ENCODE measurements at regions of chr4 and their contacts with region 1.

Region 1: GRCh38 chr4:73573794-73574406 is 46.3 kb downstream of the RASSF6 start:
- DNase-seq: peak; percentile 62
- ATAC-seq: peak; percentile 67
- H3K4me3 ChIP-seq: no peak overlapping the region
- H3K4me3 Mint-ChIP-seq: no peak overlapping the region
- H3K27ac ChIP-seq: no peak overlapping the region
- H3K27ac Mint-ChIP-seq: no peak overlapping the region
- H3K4me1 ChIP-seq: peaks cover 0 to 4% of the 10 kb centered on the region in 2 donors
- H3K4me1 Mint-ChIP-seq: peaks cover 3% of the 10 kb centered on the region
- H3K27me3 ChIP-seq: no peaks in the 10 kb centered on the region
- H3K27me3 Mint-ChIP-seq: no peaks in the 10 kb centered on the region
- CTCF ChIP-seq: peak; percentile 74

Region 2: GRCh38 chr4:73406548-73406875 is 167.4 kb before region 1 on chr4:
- CTCF ChIA-PET with region 1: no interaction called
- POLR2A ChIA-PET with region 1: no interaction called
- intact Hi-C with region 1: no loop called
- DNase-seq: no peak
- ATAC-seq: no peak
- H3K4me3 ChIP-seq: no peak overlapping the region
- H3K4me3 Mint-ChIP-seq: no peak overlapping the region
- H3K27ac ChIP-seq: no peak overlapping the region
- H3K27ac Mint-ChIP-seq: no peak overlapping the region
- H3K4me1 ChIP-seq: no peaks in the 10 kb centered on the region
- H3K4me1 Mint-ChIP-seq: no peaks in the 10 kb centered on the region
- H3K27me3 ChIP-seq: no peaks in the 10 kb centered on the region
- H3K27me3 Mint-ChIP-seq: peaks cover 3% of the 10 kb centered on the region
- CTCF ChIP-seq: no peak

Region 3: GRCh38 chr4:73445383-73446335 is 128.2 kb before region 1 on chr4:
- CTCF ChIA-PET with region 1: no interaction called
- POLR2A ChIA-PET with region 1: no interaction called
- intact Hi-C with region 1: no loop called
- DNase-seq: no peak
- ATAC-seq: no peak
- H3K4me3 ChIP-seq: no peak overlapping the region
- H3K4me3 Mint-ChIP-seq: no peak overlapping the region
- H3K27ac ChIP-seq: no peak overlapping the region
- H3K27ac Mint-ChIP-seq: no peak overlapping the region
- H3K4me1 ChIP-seq: no peaks in the 10 kb centered on the region
- H3K4me1 Mint-ChIP-seq: no peaks in the 10 kb centered on the region
- H3K27me3 ChIP-seq: peaks cover 0 to 4% (median 0%) of the 10 kb centered on the region in 4 experiments
- H3K27me3 Mint-ChIP-seq: peaks cover 25% of the 10 kb centered on the region
- CTCF ChIP-seq: no peak

Region 4: DNA sequence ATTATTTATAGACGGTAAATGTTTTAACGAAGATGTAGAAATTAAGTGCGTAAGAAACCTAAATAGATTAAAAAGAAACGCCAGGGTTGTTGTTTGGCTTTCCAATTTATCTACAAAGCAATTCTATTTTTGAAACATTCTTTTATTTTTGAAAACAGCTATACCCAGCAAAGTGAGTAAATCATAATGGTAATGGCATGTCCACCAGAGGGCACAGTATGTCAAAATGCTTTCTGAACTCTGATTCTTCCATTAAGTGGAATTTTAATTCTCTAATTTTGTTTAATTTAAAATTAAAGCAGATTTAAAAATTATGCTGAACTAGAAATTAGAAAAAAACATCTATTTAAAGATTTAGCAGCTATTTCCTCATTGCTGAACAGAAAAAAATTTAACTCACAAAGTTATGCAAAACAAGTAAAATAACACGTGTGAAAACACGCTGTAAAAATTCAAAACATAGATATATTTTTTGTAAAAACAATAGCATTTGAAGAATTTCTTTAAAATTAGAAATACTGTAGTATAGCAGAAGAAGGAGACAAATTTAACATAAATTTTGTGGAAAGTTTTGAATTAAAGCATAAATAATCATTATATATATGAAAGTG is 19.8 kb after region 1 on chr4:
- CTCF ChIA-PET with region 1: interaction called, 15 read pairs
- POLR2A ChIA-PET with region 1: interaction called, 3 read pairs
- intact Hi-C with region 1: loop called (anchors 2 kb)
- DNase-seq: peak; percentile 32
- ATAC-seq: no peak
- H3K4me3 ChIP-seq: no peak overlapping the region
- H3K4me3 Mint-ChIP-seq: no peak overlapping the region
- H3K27ac ChIP-seq: no peak overlapping the region
- H3K27ac Mint-ChIP-seq: no peak overlapping the region
- H3K4me1 ChIP-seq: peaks cover 12 to 16% of the 10 kb centered on the region in 2 donors
- H3K4me1 Mint-ChIP-seq: peaks cover 43% of the 10 kb centered on the region
- H3K27me3 ChIP-seq: no peaks in the 10 kb centered on the region
- H3K27me3 Mint-ChIP-seq: no peaks in the 10 kb centered on the region
- CTCF ChIP-seq: peak; percentile 70

Region 5: GRCh38 chr4:73653695-73654106 is 79.8 kb after region 1 on chr4:
- CTCF ChIA-PET with region 1: interaction called, 145 read pairs
- POLR2A ChIA-PET with region 1: no interaction called
- intact Hi-C with region 1: loop called (anchors 1 kb)
- DNase-seq: peak; percentile 69
- ATAC-seq: peak; percentile 75
- H3K4me3 ChIP-seq: no peak overlapping the region
- H3K4me3 Mint-ChIP-seq: no peak overlapping the region
- H3K27ac ChIP-seq: no peak overlapping the region
- H3K27ac Mint-ChIP-seq: no peak overlapping the region
- H3K4me1 ChIP-seq: no peaks in the 10 kb centered on the region
- H3K4me1 Mint-ChIP-seq: peaks cover 2% of the 10 kb centered on the region
- H3K27me3 ChIP-seq: no peaks in the 10 kb centered on the region
- H3K27me3 Mint-ChIP-seq: no peaks in the 10 kb centered on the region
- CTCF ChIP-seq: peak; percentile 81

Region 6: GRCh38 chr4:73662709-73663546 is 89.0 kb after region 1 on chr4:
- CTCF ChIA-PET with region 1: interaction called, 11 read pairs
- POLR2A ChIA-PET with region 1: no interaction called
- intact Hi-C with region 1: no loop called
- DNase-seq: peak; percentile 8
- ATAC-seq: no peak
- H3K4me3 ChIP-seq: no peak overlapping the region
- H3K4me3 Mint-ChIP-seq: no peak overlapping the region
- H3K27ac ChIP-seq: no peak overlapping the region
- H3K27ac Mint-ChIP-seq: no peak overlapping the region
- H3K4me1 ChIP-seq: no peaks in the 10 kb centered on the region
- H3K4me1 Mint-ChIP-seq: no peaks in the 10 kb centered on the region
- H3K27me3 ChIP-seq: no peaks in the 10 kb centered on the region
- H3K27me3 Mint-ChIP-seq: no peaks in the 10 kb centered on the region
- CTCF ChIP-seq: peak; percentile 27

Region 7: DNA sequence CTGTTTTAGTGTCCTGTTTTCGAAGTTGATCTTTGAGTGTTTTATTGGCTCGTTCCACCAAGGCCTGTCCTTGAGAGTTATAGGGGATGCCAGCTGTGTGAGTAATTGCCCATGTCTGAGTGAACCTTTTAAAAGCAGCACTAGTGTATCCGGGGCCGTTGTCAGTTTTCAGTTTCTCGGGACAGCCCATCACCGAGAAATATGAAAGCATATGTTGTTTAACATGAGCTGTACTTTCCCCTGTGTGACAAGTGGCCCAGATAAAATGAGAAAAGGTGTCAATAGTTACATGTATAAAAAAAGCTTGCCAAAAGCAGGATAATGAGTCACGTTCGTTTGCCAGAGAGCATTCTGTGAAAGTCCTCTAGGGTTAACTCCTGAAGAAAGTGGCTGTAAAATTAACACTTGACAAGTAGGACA is 94.9 kb after region 1 on chr4:
- CTCF ChIA-PET with region 1: interaction called, 11 read pairs
- POLR2A ChIA-PET with region 1: no interaction called
- intact Hi-C with region 1: no loop called
- DNase-seq: no peak
- ATAC-seq: no peak
- H3K4me3 ChIP-seq: no peak overlapping the region
- H3K4me3 Mint-ChIP-seq: no peak overlapping the region
- H3K27ac ChIP-seq: no peak overlapping the region
- H3K27ac Mint-ChIP-seq: no peak overlapping the region
- H3K4me1 ChIP-seq: no peaks in the 10 kb centered on the region
- H3K4me1 Mint-ChIP-seq: no peaks in the 10 kb centered on the region
- H3K27me3 ChIP-seq: no peaks in the 10 kb centered on the region
- H3K27me3 Mint-ChIP-seq: peaks cover 3% of the 10 kb centered on the region
- CTCF ChIP-seq: no peak

Region 8: DNA sequence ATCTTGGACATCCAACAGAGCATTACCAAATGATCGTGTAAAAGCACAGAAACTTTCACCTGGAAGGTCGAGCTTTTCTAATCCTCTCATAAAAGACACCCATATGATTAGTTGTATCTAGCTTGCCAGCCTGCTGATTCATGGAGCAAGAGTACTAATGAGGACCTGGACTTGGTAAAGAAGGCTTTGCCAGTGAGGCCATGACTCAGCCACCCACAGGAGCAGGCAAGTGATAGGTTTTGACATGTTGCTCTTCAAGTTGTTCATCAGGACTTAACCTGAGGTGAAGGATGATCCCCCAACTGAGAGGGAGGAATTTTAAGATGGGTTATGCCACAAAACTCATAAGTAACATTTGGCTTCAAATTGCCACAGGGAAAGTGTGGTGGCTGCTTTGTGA is 709.7 kb after region 1 on chr4:
- CTCF ChIA-PET with region 1: no interaction called
- POLR2A ChIA-PET with region 1: no interaction called
- intact Hi-C with region 1: no loop called
- DNase-seq: no peak
- ATAC-seq: no peak
- H3K4me3 ChIP-seq: no peak overlapping the region
- H3K4me3 Mint-ChIP-seq: no peak overlapping the region
- H3K27ac ChIP-seq: no peak overlapping the region
- H3K27ac Mint-ChIP-seq: no peak overlapping the region
- H3K4me1 ChIP-seq: no peaks in the 10 kb centered on the region
- H3K4me1 Mint-ChIP-seq: no peaks in the 10 kb centered on the region
- H3K27me3 ChIP-seq: no peaks in the 10 kb centered on the region
- H3K27me3 Mint-ChIP-seq: no peaks in the 10 kb centered on the region
- CTCF ChIP-seq: no peak

Region 9: GRCh38 chr4:74410272-74410671 is 836.4 kb after region 1 on chr4:
- CTCF ChIA-PET with region 1: no interaction called
- POLR2A ChIA-PET with region 1: no interaction called
- intact Hi-C with region 1: no loop called
- DNase-seq: no peak
- ATAC-seq: no peak
- H3K4me3 ChIP-seq: no peak overlapping the region
- H3K4me3 Mint-ChIP-seq: no peak overlapping the region
- H3K27ac ChIP-seq: no peak overlapping the region
- H3K27ac Mint-ChIP-seq: no peak overlapping the region
- H3K4me1 ChIP-seq: no peaks in the 10 kb centered on the region
- H3K4me1 Mint-ChIP-seq: no peaks in the 10 kb centered on the region
- H3K27me3 ChIP-seq: peaks cover 0 to 3% (median 0%) of the 10 kb centered on the region in 4 experiments
- H3K27me3 Mint-ChIP-seq: peaks cover 8% of the 10 kb centered on the region
- CTCF ChIP-seq: no peak